HepG2 (cell line): ENCODE measurements at regions of chr1 and their contacts with region 1.

Region 1: DNA sequence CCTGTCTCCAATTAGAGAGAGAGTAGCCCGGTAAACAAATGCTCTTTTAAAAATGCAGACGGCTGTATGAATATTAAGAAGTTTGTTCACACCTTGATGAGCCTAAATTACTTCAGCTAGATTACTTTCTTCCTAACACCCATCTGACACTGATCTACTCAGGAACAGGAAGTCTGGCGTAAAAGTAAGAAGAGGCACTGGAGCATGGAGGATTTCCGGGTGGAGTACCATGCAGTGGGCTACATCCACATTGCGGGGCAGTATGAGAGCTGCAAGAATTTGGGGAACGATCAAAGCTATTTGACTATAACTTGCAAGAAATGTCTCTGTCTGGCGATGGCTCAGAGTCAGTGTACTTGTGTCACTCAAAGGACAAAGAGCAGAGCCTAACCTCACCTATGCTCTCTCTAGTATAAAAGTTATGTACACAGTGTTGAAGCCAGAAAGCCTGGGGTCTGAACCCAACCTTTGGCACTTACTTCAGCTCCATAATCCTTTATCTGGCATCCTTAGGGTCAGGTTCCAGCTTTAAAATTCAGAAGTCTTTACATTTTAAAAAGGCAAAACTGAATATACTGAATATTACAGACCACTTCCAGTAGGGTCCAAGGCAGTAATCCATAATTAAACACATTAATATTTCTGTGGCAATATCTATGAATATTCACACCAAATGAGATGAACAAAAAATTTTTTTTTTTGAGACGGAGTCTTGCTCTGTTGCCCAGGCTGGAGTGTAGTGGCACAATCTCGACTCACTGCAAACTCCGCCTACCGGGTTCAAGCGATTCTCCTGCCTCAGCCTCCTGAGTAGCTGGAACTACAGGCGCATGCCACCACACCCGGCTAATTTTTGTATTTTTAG is 7.9 kb upstream of the GNPAT start:
- DNase-seq: peak; percentile 80
- ATAC-seq: peak; percentile 70
- H3K4me3 ChIP-seq: peak overlapping the region in 1 of 3 experiments; percentile 24; a peak in 1 of 6 replicates
- H3K27ac ChIP-seq: peak overlapping the region; percentile 98
- H3K4me1 ChIP-seq: peaks cover 68% of the 10 kb centered on the region
- H3K27me3 ChIP-seq: no peaks in the 10 kb centered on the region
- CTCF ChIP-seq: no peak
- EP300 ChIP-seq: peak in 1 of 2 experiments; percentile 84; a peak in 3 of 4 replicates
- POLR2A ChIP-seq: 0 out of 4 replicates have a peak, but pooled peaks of 1 of the 2 experiments have one; percentile 33
- RAD21 ChIP-seq: no peak

Region 2: GRCh38 chr1:230642263-230642959 is 590.7 kb before region 1 on chr1 and contains the start of gene COG2:
- CTCF ChIA-PET with region 1: no interaction called
- POLR2A ChIA-PET with region 1: no interaction called
- in situ Hi-C with region 1: no loop called
- intact Hi-C with region 1: no loop called
- DNase-seq: peak; percentile 77
- ATAC-seq: peak; percentile 95
- H3K4me3 ChIP-seq: peak within 1 kb of the TSS; percentile 85 to 96 (median 88)
- H3K27ac ChIP-seq: peak within 1 kb of the TSS; percentile 86
- H3K4me1 ChIP-seq: peaks cover 75% of the 10 kb centered on the region
- H3K27me3 ChIP-seq: no peaks in the 10 kb centered on the region; a peak in 1 of 5 replicates
- CTCF ChIP-seq: peak; percentile 96
- EP300 ChIP-seq: no peak; a peak in 1 of 4 replicates
- POLR2A ChIP-seq: peak; percentile 67 to 88
- RAD21 ChIP-seq: peak; percentile 93
- total RNA-seq, gene COG2: 36.3 and 51.3 TPM in 2 replicates

Region 3: DNA sequence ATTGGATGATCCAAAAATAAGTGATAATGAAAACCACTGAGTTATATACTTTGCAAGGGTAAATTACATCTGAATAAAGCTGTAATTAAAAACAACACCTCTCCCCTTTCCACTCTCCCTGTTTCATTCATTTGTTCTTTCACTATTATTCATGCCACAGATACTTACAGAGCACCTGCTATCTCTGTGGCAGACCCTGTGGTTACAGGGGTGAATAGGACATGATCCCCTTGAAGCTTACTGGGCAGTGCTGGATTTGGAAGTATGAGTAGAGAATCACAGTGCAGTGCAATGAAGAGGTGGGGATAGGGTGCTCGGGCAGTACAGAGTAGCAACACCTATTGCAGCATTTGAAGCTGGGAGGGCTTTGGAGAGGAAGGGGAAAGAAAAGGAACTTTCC is 232.5 kb before region 1 on chr1:
- CTCF ChIA-PET with region 1: no interaction called
- POLR2A ChIA-PET with region 1: no interaction called
- in situ Hi-C with region 1: no loop called
- intact Hi-C with region 1: no loop called
- DNase-seq: no peak
- ATAC-seq: no peak
- H3K4me3 ChIP-seq: no peak overlapping the region
- H3K27ac ChIP-seq: no peak overlapping the region
- H3K4me1 ChIP-seq: no peaks in the 10 kb centered on the region
- H3K27me3 ChIP-seq: no peaks in the 10 kb centered on the region
- CTCF ChIP-seq: no peak
- EP300 ChIP-seq: no peak
- POLR2A ChIP-seq: no peak
- RAD21 ChIP-seq: no peak

Region 4: DNA sequence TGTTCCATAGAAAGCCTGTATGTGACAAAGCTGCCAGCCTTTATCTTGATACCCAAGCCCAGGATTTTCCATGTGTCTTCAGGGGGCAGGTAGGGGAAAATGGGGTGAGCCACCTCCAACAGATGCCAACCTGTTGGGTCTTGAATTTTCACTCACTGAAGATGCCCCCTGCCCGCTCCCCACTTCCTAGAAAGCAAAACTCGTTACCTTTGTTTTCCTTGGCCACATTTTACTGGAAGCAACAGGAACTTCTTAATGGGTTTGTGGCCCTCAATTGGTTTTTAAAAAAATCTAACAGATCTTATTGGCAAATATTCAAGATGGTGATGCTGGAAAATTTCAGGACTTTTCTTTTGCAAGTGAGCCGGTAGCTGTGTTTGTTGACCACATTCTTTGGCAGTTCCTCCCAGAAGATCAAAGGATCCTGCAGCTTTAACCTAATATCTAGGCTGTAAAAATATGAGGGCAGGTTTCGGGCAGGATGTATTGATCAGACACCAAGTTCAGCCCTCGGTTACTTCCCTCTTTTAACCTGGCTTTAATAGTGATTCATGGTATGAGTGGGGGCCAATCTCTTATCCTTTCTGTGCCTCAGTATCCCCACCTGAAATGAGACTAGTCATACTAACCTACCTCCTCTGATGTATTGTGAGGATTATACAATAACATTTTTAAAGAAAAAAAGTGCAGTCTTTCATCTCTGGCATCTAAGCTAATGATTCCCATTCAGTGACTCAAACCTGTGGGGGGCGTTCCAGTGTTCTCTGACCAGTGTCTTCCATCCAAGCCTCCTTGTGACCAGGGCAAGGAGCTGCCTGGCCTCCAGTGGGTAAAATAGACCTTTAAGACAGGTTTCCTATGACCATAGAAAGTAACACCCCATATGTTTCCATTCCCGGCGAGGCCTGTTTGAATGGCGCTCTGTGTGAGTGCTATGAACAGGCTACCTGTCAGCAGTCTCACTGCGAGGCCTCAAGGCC is 13.4 kb before region 1 on chr1:
- CTCF ChIA-PET with region 1: no interaction called
- POLR2A ChIA-PET with region 1: interaction called, 47 read pairs
- in situ Hi-C with region 1: no loop called
- intact Hi-C with region 1: loop called (anchors 2 kb)
- DNase-seq: peak; percentile 91
- ATAC-seq: peak; percentile 80
- H3K4me3 ChIP-seq: no peak overlapping the region
- H3K27ac ChIP-seq: peak overlapping the region; percentile 59
- H3K4me1 ChIP-seq: peaks cover 59% of the 10 kb centered on the region
- H3K27me3 ChIP-seq: no peaks in the 10 kb centered on the region
- CTCF ChIP-seq: no peak
- EP300 ChIP-seq: peak in 1 of 2 experiments; percentile 92; a peak in 2 of 4 replicates
- POLR2A ChIP-seq: no peak
- RAD21 ChIP-seq: no peak

Region 5: DNA sequence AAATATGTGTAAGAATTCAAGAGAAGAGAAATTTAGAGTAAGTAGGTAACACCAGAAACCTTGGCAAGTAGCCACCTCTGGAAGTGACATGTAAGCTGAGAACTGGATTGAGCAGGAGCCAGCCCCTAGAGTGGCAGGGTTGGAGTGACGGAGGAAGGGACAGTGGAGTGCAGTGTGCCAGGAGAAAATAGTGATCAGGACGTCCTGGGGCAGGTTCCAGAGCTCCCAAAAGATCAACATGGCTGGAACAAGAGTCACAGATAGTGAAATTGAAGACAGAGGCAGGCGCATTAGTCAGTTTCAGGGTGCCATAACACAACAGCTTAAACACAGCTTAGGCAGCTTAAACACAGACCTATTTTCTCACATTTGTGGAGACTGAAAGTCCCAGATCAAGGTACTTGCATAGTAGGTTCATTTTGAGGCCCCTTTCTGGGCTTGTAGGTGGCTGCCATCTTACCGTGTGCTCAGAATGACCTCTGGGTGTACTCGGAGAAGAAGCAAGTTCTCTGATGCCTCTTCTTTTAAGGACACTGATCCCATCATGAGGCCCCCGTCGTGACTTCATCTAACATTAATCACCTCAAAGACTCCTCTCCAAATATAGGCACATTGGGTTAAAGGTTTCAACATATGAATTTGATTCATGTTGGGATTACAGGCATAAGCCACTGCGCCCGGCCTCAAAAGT is 45.1 kb after region 1 on chr1:
- CTCF ChIA-PET with region 1: no interaction called
- POLR2A ChIA-PET with region 1: no interaction called
- in situ Hi-C with region 1: no loop called
- intact Hi-C with region 1: no loop called
- DNase-seq: no peak
- ATAC-seq: peak; percentile 28; the same call in 2 of the 3 replicates
- H3K4me3 ChIP-seq: no peak overlapping the region
- H3K27ac ChIP-seq: no peak overlapping the region
- H3K4me1 ChIP-seq: no peaks in the 10 kb centered on the region
- H3K27me3 ChIP-seq: no peaks in the 10 kb centered on the region
- CTCF ChIP-seq: no peak
- EP300 ChIP-seq: no peak
- POLR2A ChIP-seq: no peak
- RAD21 ChIP-seq: no peak